ENCODE measurements at regions of chr11 and their contacts with region 1.

Region 1: DNA sequence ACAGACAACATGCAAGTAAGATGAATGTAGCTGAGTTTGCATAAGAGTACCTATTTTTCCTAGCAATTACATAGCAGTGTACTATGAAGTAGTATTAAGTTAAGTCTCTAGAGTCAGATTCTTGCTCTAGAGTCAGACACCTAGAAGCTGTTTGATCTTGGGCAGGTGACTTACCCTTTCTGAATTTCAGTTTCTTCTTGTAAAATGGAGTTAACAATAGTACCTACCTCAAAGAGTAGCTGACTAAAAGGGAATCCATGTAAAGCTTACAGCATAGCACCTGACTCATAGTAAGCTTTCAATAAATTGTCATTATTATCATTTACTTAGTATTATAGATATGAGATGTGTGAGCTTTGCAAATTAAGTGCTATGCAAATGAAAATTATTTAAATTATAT is 47.8 kb upstream of the PTPRJ start:
- DNase-seq: no peak
- ATAC-seq: peak; percentile 60
- H3K4me3 Mint-ChIP-seq: no peak overlapping the region
- H3K27ac Mint-ChIP-seq: no peak overlapping the region
- H3K4me1 Mint-ChIP-seq: peaks cover 17% of the 10 kb centered on the region
- H3K27me3 Mint-ChIP-seq: no peaks in the 10 kb centered on the region
- CTCF ChIP-seq: no peak

Region 2: GRCh38 chr11:47955061-47955755 is 22.7 kb after region 1 on chr11:
- CTCF ChIA-PET with region 1: interaction called, 35 read pairs
- POLR2A ChIA-PET with region 1: no interaction called
- intact Hi-C with region 1: no loop called
- DNase-seq: no peak
- ATAC-seq: no peak
- H3K4me3 Mint-ChIP-seq: no peak overlapping the region
- H3K27ac Mint-ChIP-seq: no peak overlapping the region
- H3K4me1 Mint-ChIP-seq: peaks cover 17% of the 10 kb centered on the region
- H3K27me3 Mint-ChIP-seq: no peaks in the 10 kb centered on the region
- CTCF ChIP-seq: no peak

Region 3: DNA sequence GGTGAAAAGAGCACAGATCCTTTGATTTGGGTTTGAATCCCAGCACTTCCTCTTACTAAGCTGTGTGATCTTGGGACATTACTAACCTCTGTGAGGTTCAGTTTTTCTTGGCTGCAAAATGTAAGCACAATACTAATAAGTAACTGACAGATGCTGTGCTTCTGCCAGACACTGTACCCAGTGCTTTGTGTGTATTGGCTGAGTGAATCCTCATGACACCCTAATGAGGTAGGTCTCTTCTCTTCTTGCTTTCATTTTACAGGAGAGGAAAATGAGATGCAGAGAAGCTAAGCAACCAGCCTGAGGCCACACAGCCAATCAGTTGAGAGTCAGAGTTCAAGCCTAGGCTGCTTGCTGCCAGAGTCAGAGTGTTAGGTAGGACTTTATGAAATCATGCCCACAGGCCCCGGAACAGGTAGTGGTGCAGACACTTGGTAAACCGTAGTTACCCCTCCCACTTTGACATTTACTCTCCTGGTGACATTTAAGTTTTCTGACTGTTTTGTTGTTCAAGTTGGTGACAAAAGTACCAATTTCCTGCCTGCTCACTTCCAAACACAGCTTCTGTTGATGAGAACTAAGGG is 69.0 kb after region 1 on chr11:
- CTCF ChIA-PET with region 1: interaction called, 11 read pairs
- POLR2A ChIA-PET with region 1: no interaction called
- intact Hi-C with region 1: loop called (anchors 5 kb)
- DNase-seq: peak; percentile 93
- ATAC-seq: peak; percentile 86
- H3K4me3 Mint-ChIP-seq: peak overlapping the region; percentile 55
- H3K27ac Mint-ChIP-seq: peak overlapping the region; percentile 99
- H3K4me1 Mint-ChIP-seq: peaks cover 78% of the 10 kb centered on the region
- H3K27me3 Mint-ChIP-seq: no peaks in the 10 kb centered on the region
- CTCF ChIP-seq: no peak

Region 4: GRCh38 chr11:48055292-48056132 is 123.0 kb after region 1 on chr11:
- CTCF ChIA-PET with region 1: interaction called, 13 read pairs
- POLR2A ChIA-PET with region 1: interaction called, 3 read pairs
- intact Hi-C with region 1: no loop called
- DNase-seq: peak; percentile 84
- ATAC-seq: peak; percentile 93
- H3K4me3 Mint-ChIP-seq: peak overlapping the region; percentile 51
- H3K27ac Mint-ChIP-seq: peak overlapping the region; percentile 87
- H3K4me1 Mint-ChIP-seq: peaks cover 70% of the 10 kb centered on the region
- H3K27me3 Mint-ChIP-seq: no peaks in the 10 kb centered on the region
- CTCF ChIP-seq: no peak

Region 5: DNA sequence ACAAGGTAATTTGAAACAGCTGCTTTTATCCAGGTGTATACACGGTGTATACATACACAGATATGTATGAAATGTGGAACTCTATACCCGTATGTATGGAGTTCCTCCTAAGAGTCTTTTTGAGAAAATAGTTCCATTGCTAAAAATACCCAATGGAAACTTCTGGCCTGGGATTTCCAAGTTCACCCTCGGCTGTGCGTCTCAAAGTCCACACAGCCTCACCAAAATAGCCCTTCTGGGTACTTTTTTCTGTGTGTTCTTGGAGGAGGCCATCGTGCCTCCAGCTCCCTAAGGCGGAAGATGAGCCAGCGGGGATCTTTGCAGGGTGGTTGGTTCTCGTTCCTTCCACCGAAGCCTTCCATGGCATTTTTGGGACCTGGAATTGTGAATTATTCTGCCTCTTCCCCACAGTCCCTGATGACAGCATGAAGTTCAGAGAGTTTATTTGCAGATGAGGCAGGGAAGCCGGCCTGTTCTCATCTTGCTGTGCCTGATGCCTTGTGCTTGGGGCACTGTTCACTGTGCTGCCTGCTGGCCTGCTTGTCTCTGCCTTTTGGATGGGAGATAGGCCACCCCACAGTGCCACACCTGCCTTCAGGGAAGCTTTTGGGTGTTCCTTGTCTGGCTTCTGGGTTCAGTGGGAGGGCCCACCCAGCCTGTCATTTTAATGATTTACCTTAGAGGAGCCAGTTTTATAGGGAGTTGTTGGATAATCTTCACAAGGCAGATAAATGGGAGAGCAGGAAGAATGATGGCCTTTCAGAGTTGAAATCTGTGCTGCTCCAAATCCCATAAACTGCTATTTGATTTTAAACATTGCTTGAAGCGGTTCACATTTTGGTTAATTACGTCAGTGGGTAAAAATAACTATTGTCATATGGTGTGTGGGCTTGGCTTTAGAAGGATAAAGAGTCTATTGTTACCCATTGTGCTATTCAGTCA is 171.3 kb after region 1 on chr11:
- CTCF ChIA-PET with region 1: interaction called, 161 read pairs
- POLR2A ChIA-PET with region 1: interaction called, 7 read pairs
- intact Hi-C with region 1: no loop called
- DNase-seq: no peak
- ATAC-seq: no peak
- H3K4me3 Mint-ChIP-seq: no peak overlapping the region
- H3K27ac Mint-ChIP-seq: no peak overlapping the region
- H3K4me1 Mint-ChIP-seq: peaks cover 51% of the 10 kb centered on the region
- H3K27me3 Mint-ChIP-seq: no peaks in the 10 kb centered on the region
- CTCF ChIP-seq: no peak